ENCODE measurements at regions of chr1 and their contacts with region 1.

Region 1: GRCh38 chr1:199243423-199244061 is 604.7 kb downstream of the PTPRC start:
- DNase-seq: peak; percentile 31 to 78 (median 57)
- ATAC-seq: peak; percentile 88
- H3K4me3 ChIP-seq: no peak overlapping the region
- H3K4me3 Mint-ChIP-seq: no peak overlapping the region
- H3K27ac ChIP-seq: no peak overlapping the region
- H3K27ac Mint-ChIP-seq: no peak overlapping the region
- H3K4me1 ChIP-seq: no peaks in the 10 kb centered on the region
- H3K4me1 Mint-ChIP-seq: no peaks in the 10 kb centered on the region
- H3K27me3 ChIP-seq: no peaks in the 10 kb centered on the region
- H3K27me3 Mint-ChIP-seq: peaks cover 3% of the 10 kb centered on the region
- CTCF ChIP-seq: peak; percentile 57

Region 2: DNA sequence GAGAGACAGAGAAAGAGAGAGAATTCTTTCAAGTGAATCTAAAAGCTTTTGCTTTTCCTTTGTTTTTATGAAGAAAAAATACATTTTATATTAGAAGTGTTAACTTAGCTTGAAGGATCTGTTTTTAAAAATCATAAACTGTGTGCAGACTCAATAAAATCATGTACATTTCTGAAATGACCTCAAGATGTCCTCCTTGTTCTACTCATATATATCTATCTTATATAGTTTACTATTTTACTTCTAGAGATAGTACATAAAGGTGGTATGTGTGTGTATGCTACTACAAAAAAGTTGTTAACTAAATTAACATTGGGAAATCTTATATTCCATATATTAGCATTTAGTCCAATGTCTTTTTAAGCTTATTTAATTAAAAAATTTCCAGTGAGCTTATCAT is 487.1 kb before region 1 on chr1:
- CTCF ChIA-PET with region 1: interaction called, 6 read pairs
- POLR2A ChIA-PET with region 1: no interaction called
- intact Hi-C with region 1: loop called in 1 of 2 experiments (anchors 5 kb)
- DNase-seq: peak in 1 of 9 experiments; percentile 34
- ATAC-seq: peak; percentile 30
- H3K4me3 ChIP-seq: no peak overlapping the region
- H3K4me3 Mint-ChIP-seq: no peak overlapping the region
- H3K27ac ChIP-seq: no peak overlapping the region
- H3K27ac Mint-ChIP-seq: no peak overlapping the region
- H3K4me1 ChIP-seq: no peaks in the 10 kb centered on the region
- H3K4me1 Mint-ChIP-seq: peaks cover 24% of the 10 kb centered on the region
- H3K27me3 ChIP-seq: no peaks in the 10 kb centered on the region
- H3K27me3 Mint-ChIP-seq: no peaks in the 10 kb centered on the region
- CTCF ChIP-seq: no peak

Region 3: GRCh38 chr1:198771563-198772153 is 471.9 kb before region 1 on chr1:
- CTCF ChIA-PET with region 1: interaction called, 6 read pairs
- POLR2A ChIA-PET with region 1: no interaction called
- intact Hi-C with region 1: loop called (anchors 1 to 2 kb)
- DNase-seq: peak in 2 of 9 experiments; percentile 38 to 61
- ATAC-seq: no peak
- H3K4me3 ChIP-seq: no peak overlapping the region
- H3K4me3 Mint-ChIP-seq: no peak overlapping the region
- H3K27ac ChIP-seq: no peak overlapping the region
- H3K27ac Mint-ChIP-seq: no peak overlapping the region
- H3K4me1 ChIP-seq: no peaks in the 10 kb centered on the region
- H3K4me1 Mint-ChIP-seq: peaks cover 2% of the 10 kb centered on the region
- H3K27me3 ChIP-seq: no peaks in the 10 kb centered on the region
- H3K27me3 Mint-ChIP-seq: no peaks in the 10 kb centered on the region
- CTCF ChIP-seq: peak; percentile 65

Region 4: GRCh38 chr1:198880818-198881597 is 362.5 kb before region 1 on chr1:
- CTCF ChIA-PET with region 1: interaction called, 4 read pairs
- POLR2A ChIA-PET with region 1: no interaction called
- intact Hi-C with region 1: loop called (anchors 5 to 10 kb)
- DNase-seq: peak in 1 of 9 experiments; percentile 24
- ATAC-seq: no peak
- H3K4me3 ChIP-seq: no peak overlapping the region
- H3K4me3 Mint-ChIP-seq: no peak overlapping the region
- H3K27ac ChIP-seq: no peak overlapping the region
- H3K27ac Mint-ChIP-seq: no peak overlapping the region
- H3K4me1 ChIP-seq: no peaks in the 10 kb centered on the region
- H3K4me1 Mint-ChIP-seq: peaks cover 6% of the 10 kb centered on the region
- H3K27me3 ChIP-seq: no peaks in the 10 kb centered on the region
- H3K27me3 Mint-ChIP-seq: no peaks in the 10 kb centered on the region
- CTCF ChIP-seq: no peak